Panc1 (cell line): ENCODE measurements at regions of chr12 and their contacts with region 1.

Region 1: DNA sequence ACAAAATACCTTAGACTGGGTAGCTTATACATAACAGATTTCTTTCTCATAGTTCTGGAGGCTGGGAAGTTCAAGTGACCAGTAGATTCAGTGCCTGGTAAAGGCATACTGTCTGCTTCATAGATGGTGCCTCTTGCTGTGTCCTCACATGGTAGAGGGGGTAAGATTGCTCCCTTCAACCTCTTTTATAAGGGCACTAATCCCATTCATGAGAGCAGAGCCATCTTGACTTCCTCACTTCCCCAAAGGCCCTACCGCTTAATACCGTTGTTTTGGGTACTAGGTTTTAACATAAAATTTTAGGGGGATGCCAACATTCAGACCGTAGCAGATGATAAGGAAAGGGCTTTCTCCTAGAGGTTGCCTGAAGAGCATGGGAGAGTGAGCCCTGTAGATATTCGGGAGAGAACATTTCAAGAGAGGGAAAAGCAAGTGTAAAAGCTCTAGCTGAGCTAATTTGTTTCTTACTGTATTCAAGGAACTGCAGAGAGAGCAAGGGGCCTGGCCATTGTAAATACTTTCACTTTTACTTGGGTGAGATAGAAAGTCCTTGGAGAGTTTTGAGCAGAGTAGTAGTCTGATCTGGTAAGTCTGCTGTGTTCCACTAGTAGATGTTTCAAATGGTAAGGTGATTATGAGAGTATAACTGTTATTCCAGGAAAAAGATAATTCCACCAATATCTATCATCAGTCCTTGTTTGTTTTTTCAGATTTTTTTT is 27.3 kb downstream of the FRS2 start:
- DNase-seq: no peak
- ATAC-seq: peak; percentile 57
- H3K4me3 ChIP-seq: no peak overlapping the region
- H3K27ac ChIP-seq: 0 out of 2 replicates have a peak overlapping the region, but pooled peaks have one; percentile 3
- H3K4me1 ChIP-seq: peaks cover 19% of the 10 kb centered on the region
- H3K27me3 ChIP-seq: no peaks in the 10 kb centered on the region
- CTCF ChIP-seq: no peak

Region 2: GRCh38 chr12:69161829-69162228 is 335.6 kb before region 1 on chr12:
- CTCF ChIA-PET with region 1: no interaction called
- POLR2A ChIA-PET with region 1: no interaction called
- in situ Hi-C with region 1: no loop called
- intact Hi-C with region 1: no loop called
- DNase-seq: no peak
- ATAC-seq: no peak
- H3K4me3 ChIP-seq: no peak overlapping the region
- H3K27ac ChIP-seq: no peak overlapping the region
- H3K4me1 ChIP-seq: peaks cover 2% of the 10 kb centered on the region
- H3K27me3 ChIP-seq: no peaks in the 10 kb centered on the region
- CTCF ChIP-seq: no peak

Region 3: DNA sequence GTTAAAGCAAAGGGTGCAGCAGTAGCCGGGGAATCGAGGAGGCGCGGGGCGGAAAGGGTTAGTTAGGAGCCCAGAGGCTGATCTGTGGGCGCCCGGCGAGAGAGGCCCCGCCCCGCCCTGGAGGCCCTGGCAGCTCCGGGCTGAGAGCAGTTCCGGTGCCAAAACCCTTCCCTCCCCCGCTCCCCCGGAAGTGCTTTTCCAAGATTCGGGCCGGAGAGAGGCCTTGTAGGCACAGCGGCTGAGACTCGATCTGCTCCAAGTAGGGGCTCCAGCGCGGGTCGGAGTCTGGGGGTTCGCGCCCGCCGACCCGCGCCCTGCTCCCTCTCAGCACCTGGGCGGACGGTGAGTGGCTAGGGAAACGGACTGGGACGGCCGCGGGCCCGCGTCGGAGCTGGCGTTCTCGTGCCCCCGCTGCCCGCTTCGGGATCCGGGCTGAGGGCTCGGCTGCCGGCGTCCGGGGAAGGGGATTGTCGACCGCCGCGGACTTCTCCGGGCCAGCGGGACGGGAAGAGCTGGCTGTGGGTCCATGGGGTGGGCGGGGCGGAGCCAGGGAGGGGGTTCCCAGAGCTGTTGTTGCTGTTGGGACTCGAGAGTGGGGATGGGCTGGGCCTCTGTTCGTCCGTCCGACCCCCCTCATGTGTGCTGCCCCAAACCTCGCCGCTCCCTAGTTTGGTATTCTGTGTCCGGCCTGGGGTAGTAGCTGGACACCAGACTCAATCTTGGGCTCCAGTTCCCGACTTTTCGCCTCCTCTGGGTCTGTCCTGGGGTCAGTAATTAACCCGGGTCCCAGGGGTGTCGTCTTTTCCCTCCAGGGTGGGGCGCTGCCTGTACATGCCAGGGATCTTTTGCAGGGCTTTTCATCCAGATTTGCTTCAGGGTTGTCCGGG is 27.0 kb before region 1 on chr12 and contains the start of gene FRS2:
- CTCF ChIA-PET with region 1: interaction called, 12 read pairs
- POLR2A ChIA-PET with region 1: no interaction called
- in situ Hi-C with region 1: no loop called
- intact Hi-C with region 1: no loop called
- DNase-seq: peak; percentile 38
- ATAC-seq: peak; percentile 99
- H3K4me3 ChIP-seq: peak within 1 kb of the TSS; percentile 80 to 94
- H3K27ac ChIP-seq: peak within 1 kb of the TSS; percentile 99
- H3K4me1 ChIP-seq: peaks cover 38% of the 10 kb centered on the region
- H3K27me3 ChIP-seq: no peaks in the 10 kb centered on the region
- CTCF ChIP-seq: peak; percentile 62; the same call in 1 of the 2 replicates
- total RNA-seq, gene FRS2: 26.6 TPM

Region 4: DNA sequence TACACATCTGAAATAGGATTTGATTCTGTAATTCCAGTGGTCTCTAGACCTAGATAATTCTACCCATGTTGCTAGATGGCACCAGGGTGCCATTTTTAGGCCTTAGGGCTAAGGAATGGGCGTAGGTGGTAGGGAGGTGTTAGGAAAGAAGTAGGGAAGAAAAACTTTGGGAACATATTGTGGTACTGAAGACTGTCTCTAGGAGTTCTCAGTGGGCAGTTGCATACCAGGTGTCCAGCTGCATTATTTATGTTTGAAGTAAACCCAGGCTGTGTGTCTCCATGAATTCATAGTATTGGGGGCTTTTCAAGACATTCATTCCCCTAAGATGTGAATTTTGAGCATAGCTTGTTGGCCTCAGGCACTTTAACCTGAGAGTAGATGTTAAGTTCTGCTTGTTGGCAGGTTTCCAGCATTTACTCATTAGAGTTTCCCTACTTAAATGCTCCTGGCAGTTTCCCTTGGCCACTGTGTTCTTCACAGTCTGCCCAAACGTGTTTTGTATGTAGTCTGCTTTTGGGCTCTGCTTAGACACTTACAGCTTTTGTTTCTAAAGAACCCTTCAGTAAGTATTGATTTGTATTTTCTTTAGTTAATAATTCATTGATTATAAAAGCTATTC is 56.3 kb after region 1 on chr12:
- CTCF ChIA-PET with region 1: no interaction called
- POLR2A ChIA-PET with region 1: interaction called, 17 read pairs
- in situ Hi-C with region 1: no loop called
- intact Hi-C with region 1: no loop called
- DNase-seq: no peak
- ATAC-seq: no peak
- H3K4me3 ChIP-seq: no peak overlapping the region
- H3K27ac ChIP-seq: no peak overlapping the region
- H3K4me1 ChIP-seq: no peaks in the 10 kb centered on the region
- H3K27me3 ChIP-seq: no peaks in the 10 kb centered on the region
- CTCF ChIP-seq: no peak

Region 5: DNA sequence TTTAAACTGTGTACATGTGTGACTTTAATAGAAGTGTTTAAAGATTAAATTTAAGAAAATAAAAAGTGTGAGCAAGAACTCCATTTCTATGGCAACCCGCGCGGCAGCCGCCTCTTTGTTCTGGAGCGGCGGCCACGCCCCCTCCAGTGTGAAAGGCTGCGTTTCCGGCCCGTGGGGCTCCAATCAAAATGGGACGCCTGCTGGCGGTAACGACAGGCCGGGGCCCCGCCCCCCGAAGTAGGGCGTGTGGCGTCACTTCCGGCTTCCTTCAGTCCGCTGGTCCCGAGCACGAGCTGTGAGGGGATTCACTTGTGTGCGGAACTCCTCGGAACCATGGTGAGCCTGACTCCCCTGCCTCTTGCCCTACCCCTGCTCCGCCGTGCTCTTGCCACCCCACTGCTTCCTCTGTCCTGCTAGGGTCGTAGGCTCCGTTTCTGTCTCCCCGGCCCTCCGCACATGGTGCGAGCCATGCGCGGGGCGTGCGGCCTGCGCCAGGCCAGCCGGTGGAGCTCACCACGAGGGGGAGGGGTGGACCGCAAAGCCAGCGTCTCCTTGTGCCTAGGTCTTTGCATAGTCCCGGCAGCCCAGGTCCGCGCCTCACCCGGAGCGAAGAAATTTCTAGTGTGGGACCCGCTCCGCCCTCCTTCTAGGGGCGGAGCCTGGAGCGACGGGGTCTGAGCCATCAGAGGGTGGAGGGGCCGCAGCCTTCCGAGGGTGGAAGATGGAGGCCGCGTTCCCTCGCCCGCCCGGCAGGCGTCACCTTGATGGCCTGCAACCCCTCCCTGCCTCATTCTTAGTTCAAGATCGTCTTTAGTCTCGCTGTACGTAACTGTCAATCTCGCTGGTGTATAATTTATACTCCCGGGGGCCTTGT is 88.0 kb after region 1 on chr12 and contains the start of gene CCT2:
- CTCF ChIA-PET with region 1: no interaction called
- POLR2A ChIA-PET with region 1: no interaction called
- in situ Hi-C with region 1: loop called (anchors 25 kb)
- intact Hi-C with region 1: no loop called
- DNase-seq: peak; percentile 65
- ATAC-seq: peak; percentile 99
- H3K4me3 ChIP-seq: peak within 1 kb of the TSS; percentile 96 to 98
- H3K27ac ChIP-seq: peak within 1 kb of the TSS; percentile 83
- H3K4me1 ChIP-seq: no peaks in the 10 kb centered on the region
- H3K27me3 ChIP-seq: no peaks in the 10 kb centered on the region
- CTCF ChIP-seq: 0 out of 2 replicates have a peak, but pooled peaks have one; percentile 18
- total RNA-seq, gene CCT2: 270 TPM

Region 6: DNA sequence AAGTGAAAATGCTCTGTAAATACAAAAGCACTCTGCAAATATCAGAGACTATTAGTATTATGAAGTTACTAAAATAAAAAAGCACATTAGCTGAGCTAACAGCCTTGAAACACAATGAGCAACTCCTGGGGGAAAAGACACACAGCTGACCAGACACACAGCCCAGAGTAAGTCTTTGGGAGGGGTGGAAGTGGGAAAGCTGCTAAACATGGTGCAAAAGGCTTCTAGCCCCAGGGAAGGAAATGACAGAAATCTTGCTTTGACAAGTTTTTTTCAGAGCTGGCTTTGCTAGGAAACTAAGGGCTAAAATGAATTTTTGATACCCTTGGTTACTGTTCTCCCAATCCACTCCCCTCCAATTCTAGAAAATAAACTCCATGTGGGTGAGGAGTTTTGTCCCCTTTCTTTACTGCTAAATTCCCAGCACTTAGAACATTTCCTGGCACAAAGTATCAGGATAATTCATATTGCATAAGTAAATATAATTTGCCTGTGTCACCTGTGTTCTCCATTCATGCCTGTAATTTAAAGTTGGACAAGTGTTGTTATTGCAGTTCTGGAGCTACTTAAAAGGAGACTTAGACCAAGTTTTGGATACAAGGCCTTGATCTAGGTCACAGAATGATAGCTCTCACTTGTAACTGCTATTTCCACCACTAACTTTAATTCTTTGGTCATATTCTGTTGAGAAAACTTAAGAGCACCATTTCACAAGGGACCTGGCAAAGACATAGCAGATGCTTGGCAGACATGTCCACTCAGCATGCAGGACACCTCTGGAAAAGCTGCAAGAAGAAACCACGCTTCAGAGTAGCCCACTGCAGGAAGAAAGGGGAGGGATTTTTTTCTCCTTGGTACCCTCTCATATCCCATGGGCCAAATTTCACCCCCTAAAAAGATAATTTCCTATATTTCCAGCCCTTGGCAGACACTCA is 222.2 kb after region 1 on chr12:
- CTCF ChIA-PET with region 1: no interaction called
- POLR2A ChIA-PET with region 1: no interaction called
- in situ Hi-C with region 1: no loop called
- intact Hi-C with region 1: no loop called
- DNase-seq: no peak
- ATAC-seq: no peak; the same call in 1 of the 2 replicates
- H3K4me3 ChIP-seq: no peak overlapping the region
- H3K27ac ChIP-seq: no peak overlapping the region
- H3K4me1 ChIP-seq: no peaks in the 10 kb centered on the region
- H3K27me3 ChIP-seq: no peaks in the 10 kb centered on the region
- CTCF ChIP-seq: no peak